ENCODE measurements at regions of chr1 and their contacts with region 1.

Region 1: GRCh38 chr1:169893494-169894362 is at the start of gene SCYL3:
- DNase-seq: peak; percentile 96
- H3K4me3 Mint-ChIP-seq: peak within 1 kb of the TSS; percentile 84
- H3K27ac Mint-ChIP-seq: peak within 1 kb of the TSS; percentile 99
- H3K4me1 Mint-ChIP-seq: peaks cover 44% of the 10 kb centered on the region
- H3K27me3 Mint-ChIP-seq: peaks cover 14% of the 10 kb centered on the region
- total RNA-seq, gene SCYL3: 10.8 and 11.9 TPM in 2 replicates

Region 2: GRCh38 chr1:169586395-169587255 is 307.1 kb before region 1 on chr1 and contains the start of gene F5:
- intact Hi-C with region 1: loop called (anchors 5 kb)
- DNase-seq: peak; percentile 92
- H3K4me3 Mint-ChIP-seq: peak within 1 kb of the TSS; percentile 95
- H3K27ac Mint-ChIP-seq: peak within 1 kb of the TSS; percentile 92
- H3K4me1 Mint-ChIP-seq: peaks cover 62% of the 10 kb centered on the region
- H3K27me3 Mint-ChIP-seq: no peaks in the 10 kb centered on the region
- total RNA-seq, gene F5: 46.3 and 51.3 TPM in 2 replicates

Region 3: DNA sequence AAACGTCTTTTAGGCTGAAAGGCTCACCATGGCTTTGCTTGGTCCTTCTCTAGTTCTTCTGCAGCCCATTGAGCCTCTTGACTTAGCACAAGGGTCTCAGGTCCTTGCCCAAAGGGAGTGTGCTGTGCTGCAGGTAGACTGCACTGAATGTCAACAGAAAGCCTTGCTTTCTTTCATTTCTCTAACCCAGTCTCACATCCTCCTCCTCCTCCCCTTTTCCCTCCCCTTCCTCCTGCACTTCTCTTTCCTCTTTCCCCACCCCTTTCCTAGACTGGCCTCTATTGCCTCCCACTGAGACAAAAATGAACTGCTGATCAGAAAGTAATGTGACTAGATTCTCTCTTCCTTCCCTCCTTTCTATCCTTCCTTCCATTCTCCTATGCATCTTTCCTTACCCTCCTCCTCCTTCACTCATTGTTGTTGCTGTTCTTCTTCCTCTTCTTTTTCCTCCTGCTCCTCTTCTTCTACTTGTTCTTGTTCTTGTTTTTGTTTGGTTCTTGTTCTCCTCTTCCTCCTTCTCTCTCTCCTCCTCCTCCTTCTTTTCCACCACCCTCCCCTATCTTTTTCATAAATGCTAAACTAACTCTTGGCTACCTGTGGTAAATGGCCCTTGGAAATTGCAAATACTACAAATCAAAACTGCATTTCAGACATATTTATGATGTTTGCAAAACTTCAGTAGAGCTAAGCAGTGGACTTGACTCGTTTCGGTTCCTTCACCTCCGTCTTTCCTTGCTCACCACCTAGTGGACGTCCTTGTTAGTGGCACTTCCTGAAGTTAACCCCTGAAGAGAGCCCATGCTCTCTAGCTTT is 182.1 kb before region 1 on chr1 and contains the start of gene SELL:
- intact Hi-C with region 1: loop called (anchors 5 kb)
- DNase-seq: peak; percentile 94
- H3K4me3 Mint-ChIP-seq: peak within 1 kb of the TSS; percentile 89
- H3K27ac Mint-ChIP-seq: peak within 1 kb of the TSS; percentile 90
- H3K4me1 Mint-ChIP-seq: peaks cover 34% of the 10 kb centered on the region
- H3K27me3 Mint-ChIP-seq: peaks cover 22% of the 10 kb centered on the region
- total RNA-seq, gene SELL: 82.3 and 92.7 TPM in 2 replicates

Region 4: DNA sequence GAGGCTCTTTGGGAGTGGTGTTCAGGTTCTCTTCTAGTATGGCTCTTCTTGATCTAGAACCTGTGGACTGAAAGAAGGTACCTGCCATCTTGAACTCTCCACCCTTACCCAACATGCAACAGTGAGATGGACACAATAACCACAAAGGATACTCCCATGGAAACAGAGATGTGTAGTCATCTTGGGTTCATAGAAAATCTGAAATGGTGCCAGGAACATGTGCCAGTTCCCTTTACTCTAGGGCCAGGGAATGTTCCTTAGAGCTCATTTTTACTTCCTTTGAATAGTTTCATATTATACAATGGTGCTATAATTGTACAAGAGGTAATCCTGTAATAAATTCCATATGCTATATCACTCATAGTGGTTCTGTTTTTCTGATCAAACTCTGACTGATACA is 13.2 kb after region 1 on chr1:
- intact Hi-C with region 1: loop called (anchors 2 kb)
- DNase-seq: no peak
- H3K4me3 Mint-ChIP-seq: no peak overlapping the region
- H3K27ac Mint-ChIP-seq: no peak overlapping the region
- H3K4me1 Mint-ChIP-seq: peaks cover 27% of the 10 kb centered on the region
- H3K27me3 Mint-ChIP-seq: peaks cover 3% of the 10 kb centered on the region

Region 5: GRCh38 chr1:170074250-170075157 is 180.8 kb after region 1 on chr1 and contains the start of gene KIFAP3:
- intact Hi-C with region 1: loop called (anchors 1 kb)
- DNase-seq: peak; percentile 99
- H3K4me3 Mint-ChIP-seq: peak within 1 kb of the TSS; percentile 91
- H3K27ac Mint-ChIP-seq: peak within 1 kb of the TSS; percentile 93
- H3K4me1 Mint-ChIP-seq: peaks cover 38% of the 10 kb centered on the region
- H3K27me3 Mint-ChIP-seq: peaks cover 2% of the 10 kb centered on the region
- total RNA-seq, gene KIFAP3: 11.9 and 12.8 TPM in 2 replicates

Region 6: GRCh38 chr1:171485375-171486047 is 1591.8 kb after region 1 on chr1 and contains the start of gene PRRC2C:
- intact Hi-C with region 1: loop called (anchors 5 kb)
- DNase-seq: peak; percentile 98
- H3K4me3 Mint-ChIP-seq: peak within 1 kb of the TSS; percentile 94
- H3K27ac Mint-ChIP-seq: peak within 1 kb of the TSS; percentile 99
- H3K4me1 Mint-ChIP-seq: peaks cover 40% of the 10 kb centered on the region
- H3K27me3 Mint-ChIP-seq: no peaks in the 10 kb centered on the region
- total RNA-seq, gene PRRC2C: 278 TPM in 2 replicates

Region 7: GRCh38 chr1:171781176-171781875 is 1887.6 kb after region 1 on chr1 and contains the start of gene METTL13:
- intact Hi-C with region 1: loop called (anchors 2 kb)
- DNase-seq: peak; percentile 100
- H3K4me3 Mint-ChIP-seq: peak within 1 kb of the TSS; percentile 98
- H3K27ac Mint-ChIP-seq: peak within 1 kb of the TSS; percentile 94
- H3K4me1 Mint-ChIP-seq: peaks cover 45% of the 10 kb centered on the region
- H3K27me3 Mint-ChIP-seq: no peaks in the 10 kb centered on the region
- total RNA-seq, gene METTL13: 56.1 and 57.8 TPM in 2 replicates